H1 (cell line): ENCODE measurements at regions of chr7 and their contacts with region 1.

Region 1: GRCh38 chr7:142811154-142811737 is 40.5 kb downstream of the PRSS2 start:
- DNase-seq: no peak
- H3K4me3 ChIP-seq: no peak overlapping the region
- H3K27ac ChIP-seq: no peak overlapping the region
- H3K4me1 ChIP-seq: peaks cover 10 to 23% (median 17%) of the 10 kb centered on the region in 4 experiments
- H3K27me3 ChIP-seq: no peaks in the 10 kb centered on the region
- CTCF ChIP-seq: peak in 2 of 3 experiments; percentile 60 to 68; a peak in 3 of 4 replicates
- EP300 ChIP-seq: no peak
- POLR2A ChIP-seq: no peak
- RAD21 ChIP-seq: peak; percentile 65 to 78

Region 2: GRCh38 chr7:142626420-142627035 is 184.7 kb before region 1 on chr7:
- CTCF ChIA-PET with region 1: interaction called, 105 read pairs
- POLR2A ChIA-PET with region 1: no interaction called
- DNase-seq: peak in 1 of 2 experiments; percentile 94
- H3K4me3 ChIP-seq: no peak overlapping the region
- H3K27ac ChIP-seq: no peak overlapping the region
- H3K4me1 ChIP-seq: peaks cover 0 to 3% (median 0%) of the 10 kb centered on the region in 4 experiments; a peak in 1 of 7 replicates
- H3K27me3 ChIP-seq: no peaks in the 10 kb centered on the region; a peak in 1 of 7 replicates
- CTCF ChIP-seq: peak; percentile 60 to 85 (median 79)
- EP300 ChIP-seq: no peak
- POLR2A ChIP-seq: no peak
- RAD21 ChIP-seq: peak; percentile 55 to 62

Region 3: DNA sequence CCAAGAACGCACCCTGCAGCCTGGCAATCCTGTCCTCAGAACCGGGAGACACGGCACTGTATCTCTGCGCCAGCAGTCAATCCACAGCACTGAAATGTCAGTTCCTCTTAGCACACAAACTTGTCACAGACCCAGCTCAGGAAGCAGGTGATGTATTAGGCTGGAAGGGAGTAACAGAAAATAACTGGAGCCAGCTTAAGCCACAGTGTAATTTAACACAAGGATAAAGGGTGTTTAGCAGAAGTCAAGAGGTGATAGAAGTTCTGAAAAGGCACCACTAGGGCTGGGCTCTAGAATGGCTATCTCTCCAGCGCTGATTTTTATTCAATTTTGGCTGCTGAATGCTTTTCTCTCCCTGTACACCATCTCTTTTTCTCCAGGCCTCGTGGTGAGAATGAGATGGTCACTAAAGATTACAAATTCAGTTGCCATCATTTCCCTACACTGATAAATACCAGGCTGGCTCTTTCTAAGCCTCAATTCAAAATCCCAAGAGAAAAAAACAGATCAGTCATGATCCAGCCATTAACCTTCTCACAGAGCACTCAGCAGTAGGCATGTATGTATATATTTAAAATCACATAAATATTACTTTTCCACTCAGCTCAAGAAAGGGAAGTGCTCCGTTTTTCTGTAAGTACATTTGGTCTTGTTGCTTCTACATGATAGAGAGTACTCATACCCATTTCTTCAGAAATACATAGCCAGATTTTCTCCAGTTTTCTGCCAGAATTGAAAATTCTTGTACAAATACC is 164.7 kb before region 1 on chr7:
- CTCF ChIA-PET with region 1: interaction called, 13 read pairs
- POLR2A ChIA-PET with region 1: no interaction called
- DNase-seq: no peak
- H3K4me3 ChIP-seq: no peak overlapping the region
- H3K27ac ChIP-seq: no peak overlapping the region
- H3K4me1 ChIP-seq: no peaks in the 10 kb centered on the region
- H3K27me3 ChIP-seq: no peaks in the 10 kb centered on the region
- CTCF ChIP-seq: peak in 1 of 3 experiments; percentile 2; a peak in 1 of 4 replicates
- EP300 ChIP-seq: no peak
- POLR2A ChIP-seq: no peak
- RAD21 ChIP-seq: no peak

Region 4: DNA sequence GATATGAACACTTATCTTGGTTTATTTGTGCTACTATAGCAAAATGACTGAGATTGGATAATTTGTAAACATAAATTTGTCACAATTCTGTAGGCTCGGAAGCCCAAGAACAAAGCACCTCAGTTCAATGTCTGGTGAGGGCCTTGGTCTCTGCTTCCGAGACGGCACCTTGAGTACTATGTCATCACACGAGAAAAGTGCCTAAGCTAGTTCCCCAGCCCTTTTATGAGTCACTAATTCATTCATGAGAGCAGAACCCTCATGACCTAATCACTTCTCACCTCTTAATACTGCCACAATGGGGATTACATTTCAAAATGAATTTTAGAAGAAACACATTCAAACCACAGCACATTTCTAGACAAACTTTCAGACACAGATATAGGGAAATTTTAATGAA is 114.0 kb before region 1 on chr7:
- CTCF ChIA-PET with region 1: no interaction called
- POLR2A ChIA-PET with region 1: no interaction called
- DNase-seq: no peak
- H3K4me3 ChIP-seq: peak overlapping the region in 1 of 4 experiments; percentile 45; a peak in 1 of 8 replicates
- H3K27ac ChIP-seq: peak overlapping the region; percentile 50
- H3K4me1 ChIP-seq: peaks cover 12 to 21% (median 17%) of the 10 kb centered on the region in 4 experiments; a peak in 6 of 7 replicates
- H3K27me3 ChIP-seq: no peaks in the 10 kb centered on the region
- CTCF ChIP-seq: no peak
- EP300 ChIP-seq: no peak
- POLR2A ChIP-seq: no peak
- RAD21 ChIP-seq: no peak

Region 5: GRCh38 chr7:142796608-142797385 is 14.4 kb before region 1 on chr7:
- CTCF ChIA-PET with region 1: interaction called, 430 read pairs
- POLR2A ChIA-PET with region 1: interaction called, 36 read pairs
- DNase-seq: peak in 1 of 2 experiments; percentile 64
- H3K4me3 ChIP-seq: peak overlapping the region; percentile 51 to 80 (median 69)
- H3K27ac ChIP-seq: no peak overlapping the region
- H3K4me1 ChIP-seq: peaks cover 14 to 30% (median 17%) of the 10 kb centered on the region in 4 experiments
- H3K27me3 ChIP-seq: peaks cover 1 to 36% (median 26%) of the 10 kb centered on the region in 4 experiments; a peak in 6 of 7 replicates
- CTCF ChIP-seq: no peak
- EP300 ChIP-seq: no peak
- POLR2A ChIP-seq: peak; percentile 21 to 43; a peak in 1 of 3 replicates
- RAD21 ChIP-seq: no peak

Region 6: GRCh38 chr7:142873281-142873787 is 62.1 kb after region 1 on chr7:
- CTCF ChIA-PET with region 1: interaction called, 12 read pairs
- POLR2A ChIA-PET with region 1: no interaction called
- DNase-seq: peak in 1 of 2 experiments; percentile 84
- H3K4me3 ChIP-seq: no peak overlapping the region
- H3K27ac ChIP-seq: no peak overlapping the region
- H3K4me1 ChIP-seq: no peaks in the 10 kb centered on the region; a peak in 1 of 7 replicates
- H3K27me3 ChIP-seq: no peaks in the 10 kb centered on the region; a peak in 1 of 7 replicates
- CTCF ChIP-seq: peak; percentile 83 to 94 (median 90)
- EP300 ChIP-seq: no peak
- POLR2A ChIP-seq: no peak
- RAD21 ChIP-seq: peak; percentile 54 to 63